Astrocyte of the cerebellum (primary cell): ENCODE measurements at regions of chr1 and their contacts with region 1.

Region 1: GRCh38 chr1:153922972-153923925 is at the start of gene GATAD2B:
- DNase-seq: peak; percentile 100
- H3K4me3 ChIP-seq: peak within 1 kb of the TSS; percentile 82
- CTCF ChIP-seq: no peak

Region 2: GRCh38 chr1:153805042-153805745 is 118.1 kb before region 1 on chr1:
- in situ Hi-C with region 1: loop called (anchors 25 kb)
- DNase-seq: peak; percentile 24
- H3K4me3 ChIP-seq: no peak overlapping the region
- CTCF ChIP-seq: no peak

Region 3: DNA sequence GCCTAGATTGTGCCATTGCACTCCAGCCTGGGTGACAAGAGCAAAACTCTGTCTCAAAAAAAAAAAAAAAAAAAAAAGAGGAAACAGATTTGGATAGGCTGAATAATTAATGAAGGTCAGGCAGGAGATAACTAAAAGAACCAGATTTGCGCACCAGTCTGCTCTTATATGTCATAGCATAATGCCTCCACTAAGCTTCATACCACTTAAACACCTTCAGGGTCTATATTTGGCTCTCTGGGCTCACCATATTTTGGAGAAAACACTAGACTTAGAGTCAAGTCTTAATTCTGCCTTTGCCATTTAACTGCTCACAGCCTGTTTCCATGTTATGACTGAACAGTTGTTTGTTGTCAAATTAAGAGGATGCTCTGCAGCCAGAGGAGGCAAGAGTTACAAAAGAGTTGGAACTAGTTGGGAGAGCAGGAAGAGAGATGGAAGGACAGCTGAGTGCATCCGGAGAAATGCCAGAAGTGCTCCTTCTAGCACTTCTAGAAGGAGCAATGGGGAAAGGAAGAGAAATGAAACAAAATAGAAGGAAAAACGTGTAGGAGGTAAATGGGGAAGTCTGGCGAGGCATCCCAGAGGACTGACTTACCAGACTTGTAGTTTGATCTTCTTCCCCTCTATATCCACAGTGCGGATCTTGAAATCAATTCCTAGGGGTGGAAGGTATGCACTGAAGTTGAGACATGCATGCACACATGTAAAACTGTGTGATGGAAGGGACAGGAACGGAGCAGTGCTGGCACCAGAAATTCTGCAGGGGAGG is 61.1 kb after region 1 on chr1:
- in situ Hi-C with region 1: loop called (anchors 5 kb)
- DNase-seq: no peak
- H3K4me3 ChIP-seq: peak overlapping the region; percentile 91
- CTCF ChIP-seq: no peak